ENCODE measurements at regions of chr9 and their contacts with region 1.

Region 1: GRCh38 chr9:16871356-16872151 is 1.1 kb upstream of the BNC2 start:
- DNase-seq: no peak
- H3K4me3 ChIP-seq: peak overlapping the region; percentile 56 to 85 (median 82)
- H3K27ac ChIP-seq: peak overlapping the region; percentile 81 to 95 (median 92)
- H3K4me1 ChIP-seq: peaks cover 0 to 59% (median 0%) of the 10 kb centered on the region in 3 donors
- H3K27me3 ChIP-seq: peaks cover 0 to 27% (median 0%) of the 10 kb centered on the region in 4 donors
- CTCF ChIP-seq: no peak
- POLR2A ChIP-seq: peak in 2 of 4 donors; percentile 32 to 35

Region 2: GRCh38 chr9:16729651-16730050 is 141.9 kb before region 1 on chr9:
- intact Hi-C with region 1: loop called (anchors 10 kb)
- DNase-seq: no peak
- H3K4me3 ChIP-seq: no peak overlapping the region
- H3K27ac ChIP-seq: peak overlapping the region in 2 of 4 donors; percentile 7 to 21
- H3K4me1 ChIP-seq: peaks cover 4 to 67% (median 6%) of the 10 kb centered on the region in 3 donors
- H3K27me3 ChIP-seq: no peaks in the 10 kb centered on the region
- CTCF ChIP-seq: no peak
- POLR2A ChIP-seq: no peak

Region 3: DNA sequence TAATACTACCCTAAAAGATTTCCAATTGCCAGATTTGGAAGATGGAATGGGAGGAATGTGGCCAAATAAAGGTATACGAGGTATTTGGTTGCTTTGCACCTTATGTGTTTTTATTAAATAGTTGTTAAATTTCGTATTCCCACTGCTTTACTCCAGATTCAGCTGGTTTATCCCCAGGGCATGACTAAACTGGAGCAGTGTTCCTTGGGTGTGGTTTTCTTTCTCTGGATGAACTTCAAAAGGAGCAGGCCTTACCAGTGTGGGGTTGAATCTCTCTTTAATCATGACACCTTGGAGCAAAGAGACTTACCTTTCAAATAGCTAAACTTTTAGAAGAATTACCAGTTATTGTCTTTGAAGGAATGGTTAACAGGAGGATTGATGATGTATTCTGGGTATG is 120.6 kb after region 1 on chr9:
- intact Hi-C with region 1: loop called (anchors 10 kb)
- DNase-seq: no peak
- H3K4me3 ChIP-seq: no peak overlapping the region
- H3K27ac ChIP-seq: no peak overlapping the region
- H3K4me1 ChIP-seq: peaks cover 0 to 7% (median 4%) of the 10 kb centered on the region in 3 donors
- H3K27me3 ChIP-seq: no peaks in the 10 kb centered on the region
- CTCF ChIP-seq: no peak
- POLR2A ChIP-seq: no peak

Measured in esophagus squamous epithelium (tissue), 5 donors.